ENCODE measurements at regions of chr18 and their contacts with region 1.

Region 1: GRCh38 chr18:12038639-12039417 is 54.8 kb upstream of the ANKRD62 start:
- DNase-seq: peak; percentile 65
- ATAC-seq: peak; percentile 95
- H3K4me3 ChIP-seq: peak overlapping the region; percentile 55
- H3K27ac ChIP-seq: peak overlapping the region; percentile 28; the same call in 1 of the 2 replicates
- H3K4me1 ChIP-seq: peaks cover 8% of the 10 kb centered on the region; the same call in 1 of the 2 replicates
- H3K27me3 ChIP-seq: no peaks in the 10 kb centered on the region
- CTCF ChIP-seq: peak; percentile 96
- POLR2A ChIP-seq: 0 out of 2 replicates have a peak, but pooled peaks have one; percentile 40
- RAD21 ChIP-seq: peak; percentile 95

Region 2: GRCh38 chr18:11654736-11655605 is 383.9 kb before region 1 on chr18:
- CTCF ChIA-PET with region 1: no interaction called
- POLR2A ChIA-PET with region 1: no interaction called
- dilution Hi-C with region 1: no loop called
- in situ Hi-C with region 1: no loop called
- intact Hi-C with region 1: loop called (anchors 2 kb)
- DNase-seq: peak; percentile 4
- ATAC-seq: peak; percentile 93
- H3K4me3 ChIP-seq: no peak overlapping the region
- H3K27ac ChIP-seq: no peak overlapping the region
- H3K4me1 ChIP-seq: no peaks in the 10 kb centered on the region
- H3K27me3 ChIP-seq: peaks cover 44% of the 10 kb centered on the region
- CTCF ChIP-seq: peak; percentile 64
- POLR2A ChIP-seq: no peak
- RAD21 ChIP-seq: peak; percentile 75

Region 3: DNA sequence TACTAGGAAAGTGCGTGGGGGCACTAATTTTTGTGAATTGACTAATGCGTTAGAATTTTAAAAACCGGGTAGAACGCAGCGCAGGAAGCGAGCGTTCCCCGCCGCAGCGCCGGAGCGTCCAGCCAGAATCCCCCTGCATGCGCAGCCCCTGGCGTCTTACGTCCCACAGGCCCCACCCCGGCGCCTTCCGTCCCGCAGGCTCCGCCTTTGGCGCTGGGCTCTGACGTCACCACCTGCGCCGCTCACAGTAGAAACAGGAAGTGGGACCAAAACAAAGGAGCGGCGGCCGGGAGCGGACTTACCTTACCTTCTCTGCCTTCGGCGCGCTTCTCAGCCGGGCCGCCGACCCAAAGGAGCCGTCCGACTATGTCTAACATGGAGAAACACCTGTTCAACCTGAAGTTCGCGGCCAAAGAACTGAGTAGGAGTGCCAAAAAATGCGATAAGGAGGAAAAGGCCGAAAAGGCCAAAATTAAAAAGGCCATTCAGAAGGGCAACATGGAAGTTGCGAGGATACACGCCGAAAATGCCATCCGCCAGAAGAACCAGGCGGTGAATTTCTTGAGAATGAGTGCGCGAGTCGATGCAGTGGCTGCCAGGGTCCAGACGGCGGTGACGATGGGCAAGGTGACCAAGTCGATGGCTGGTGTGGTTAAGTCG is 187.6 kb before region 1 on chr18 and contains the start of gene CHMP1B:
- CTCF ChIA-PET with region 1: no interaction called
- POLR2A ChIA-PET with region 1: no interaction called
- dilution Hi-C with region 1: no loop called
- in situ Hi-C with region 1: no loop called
- intact Hi-C with region 1: loop called (anchors 2 kb)
- DNase-seq: peak; percentile 98
- ATAC-seq: peak; percentile 96
- H3K4me3 ChIP-seq: peak within 1 kb of the TSS; percentile 83
- H3K27ac ChIP-seq: peak within 1 kb of the TSS; percentile 84
- H3K4me1 ChIP-seq: peaks cover 10% of the 10 kb centered on the region
- H3K27me3 ChIP-seq: no peaks in the 10 kb centered on the region
- CTCF ChIP-seq: no peak
- POLR2A ChIP-seq: peak; percentile 95
- RAD21 ChIP-seq: peak; percentile 6; the same call in 1 of the 2 replicates
- total RNA-seq, gene CHMP1B: 39.4 and 69.7 TPM in 2 replicates

Region 4: GRCh38 chr18:11937874-11938478 is 100.9 kb before region 1 on chr18:
- CTCF ChIA-PET with region 1: interaction called, 15 read pairs
- POLR2A ChIA-PET with region 1: no interaction called
- dilution Hi-C with region 1: no loop called
- in situ Hi-C with region 1: loop called (anchors 5 kb)
- intact Hi-C with region 1: loop called (anchors 1 kb)
- DNase-seq: peak; percentile 61
- ATAC-seq: peak; percentile 86
- H3K4me3 ChIP-seq: no peak overlapping the region
- H3K27ac ChIP-seq: no peak overlapping the region
- H3K4me1 ChIP-seq: peaks cover 2% of the 10 kb centered on the region; the same call in 1 of the 2 replicates
- H3K27me3 ChIP-seq: no peaks in the 10 kb centered on the region
- CTCF ChIP-seq: peak; percentile 84
- POLR2A ChIP-seq: no peak
- RAD21 ChIP-seq: peak; percentile 89

Region 5: DNA sequence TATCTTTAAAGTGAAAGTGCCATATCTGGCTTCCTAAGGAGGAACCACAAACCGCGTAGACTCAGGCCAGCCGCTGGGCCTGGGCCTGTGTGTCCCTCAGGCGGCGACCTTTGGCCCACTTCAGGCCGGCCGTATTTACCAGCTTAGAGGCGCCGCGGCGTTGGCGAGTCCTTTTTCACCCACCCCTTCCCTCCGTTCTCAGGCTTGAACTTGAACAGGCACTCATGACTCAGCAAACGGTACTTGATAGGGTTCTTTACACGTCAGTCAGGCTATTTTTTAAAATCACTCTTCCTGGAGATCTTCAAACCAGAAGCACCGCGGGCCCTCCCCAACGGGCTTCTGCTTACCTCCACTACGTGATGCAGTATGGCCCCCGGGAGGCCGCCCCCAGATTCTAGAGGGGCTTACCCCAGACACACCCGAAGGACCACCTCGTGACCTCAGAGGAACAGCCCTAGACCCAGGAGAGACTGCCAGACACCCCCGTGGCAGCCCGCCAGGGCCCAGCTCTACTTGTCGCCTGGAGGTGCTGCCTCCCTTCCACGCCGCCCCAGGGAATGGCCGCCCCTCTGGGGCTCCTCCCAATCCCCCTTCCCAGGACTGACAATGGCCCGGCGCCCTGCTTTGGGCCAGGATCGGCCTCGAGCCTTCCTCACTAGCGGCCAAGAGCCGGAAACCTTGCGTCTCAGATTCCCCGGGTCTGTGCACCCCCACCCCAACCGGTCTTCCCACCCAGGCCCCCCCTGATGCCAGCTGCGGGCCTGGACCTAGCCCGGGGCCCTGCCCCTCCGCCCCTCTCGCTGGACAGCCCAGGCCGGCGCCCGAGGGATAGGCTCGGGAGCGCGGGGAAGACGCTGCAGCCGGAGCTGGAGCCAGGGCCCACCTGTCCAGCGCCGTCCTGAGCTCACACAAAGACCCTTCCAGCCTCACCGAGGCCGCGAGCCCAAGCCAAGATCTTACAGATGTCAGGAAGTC is 91.3 kb before region 1 on chr18:
- CTCF ChIA-PET with region 1: no interaction called
- POLR2A ChIA-PET with region 1: no interaction called
- dilution Hi-C with region 1: no loop called
- in situ Hi-C with region 1: loop called (anchors 5 kb)
- intact Hi-C with region 1: no loop called
- DNase-seq: peak; percentile 97
- ATAC-seq: peak; percentile 88
- H3K4me3 ChIP-seq: no peak overlapping the region
- H3K27ac ChIP-seq: peak overlapping the region; percentile 88
- H3K4me1 ChIP-seq: peaks cover 24% of the 10 kb centered on the region
- H3K27me3 ChIP-seq: no peaks in the 10 kb centered on the region
- CTCF ChIP-seq: no peak
- POLR2A ChIP-seq: no peak
- RAD21 ChIP-seq: no peak

Region 6: DNA sequence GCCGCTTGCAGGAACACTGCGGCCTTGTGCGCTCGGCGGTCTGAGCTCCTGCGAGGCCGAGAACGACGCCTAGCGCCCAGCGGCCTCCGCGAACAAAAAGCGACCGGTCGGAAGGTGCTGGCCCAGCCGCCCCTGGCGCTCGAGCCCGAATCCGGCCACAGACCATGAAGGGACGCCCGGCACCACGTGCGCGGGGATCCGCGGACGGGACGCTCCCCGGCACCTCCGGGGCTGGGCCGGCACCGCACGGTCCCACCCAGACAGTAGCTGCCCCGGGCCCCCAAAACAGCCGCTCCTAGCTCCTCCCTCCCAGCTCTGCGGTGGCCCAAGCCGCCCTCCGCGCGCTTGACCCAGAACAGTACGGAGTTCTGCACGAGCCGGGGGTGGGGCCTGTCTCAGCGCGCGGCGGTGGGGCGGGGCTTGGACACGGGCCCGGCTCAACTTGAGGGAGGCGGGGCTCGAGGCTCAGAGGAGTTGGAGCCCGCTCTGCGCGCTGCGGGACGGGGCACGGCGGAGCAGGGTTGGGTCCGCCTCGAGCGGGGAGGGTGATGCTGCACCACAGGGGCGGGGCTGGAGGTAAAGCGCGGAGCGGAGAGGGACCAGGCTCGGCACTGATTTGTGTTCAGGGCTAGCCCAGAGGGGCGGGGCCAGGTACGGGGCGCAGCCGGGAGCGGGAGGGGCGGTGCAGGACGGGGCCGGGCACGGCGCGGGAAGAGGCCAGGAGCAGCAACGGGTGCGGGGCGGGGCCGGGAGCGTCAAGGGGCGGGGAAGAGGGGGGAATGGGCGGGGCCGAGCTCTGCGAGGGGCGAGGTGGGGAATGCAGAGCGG is 58.1 kb before region 1 on chr18:
- CTCF ChIA-PET with region 1: no interaction called
- POLR2A ChIA-PET with region 1: no interaction called
- dilution Hi-C with region 1: no loop called
- in situ Hi-C with region 1: no loop called
- intact Hi-C with region 1: loop called (anchors 5 kb)
- DNase-seq: peak; percentile 96
- ATAC-seq: peak; percentile 92
- H3K4me3 ChIP-seq: peak overlapping the region; percentile 46
- H3K27ac ChIP-seq: peak overlapping the region; percentile 76
- H3K4me1 ChIP-seq: peaks cover 7% of the 10 kb centered on the region
- H3K27me3 ChIP-seq: no peaks in the 10 kb centered on the region
- CTCF ChIP-seq: 0 out of 2 replicates have a peak, but pooled peaks have one; percentile 15
- POLR2A ChIP-seq: peak; percentile 69
- RAD21 ChIP-seq: no peak

Region 7: DNA sequence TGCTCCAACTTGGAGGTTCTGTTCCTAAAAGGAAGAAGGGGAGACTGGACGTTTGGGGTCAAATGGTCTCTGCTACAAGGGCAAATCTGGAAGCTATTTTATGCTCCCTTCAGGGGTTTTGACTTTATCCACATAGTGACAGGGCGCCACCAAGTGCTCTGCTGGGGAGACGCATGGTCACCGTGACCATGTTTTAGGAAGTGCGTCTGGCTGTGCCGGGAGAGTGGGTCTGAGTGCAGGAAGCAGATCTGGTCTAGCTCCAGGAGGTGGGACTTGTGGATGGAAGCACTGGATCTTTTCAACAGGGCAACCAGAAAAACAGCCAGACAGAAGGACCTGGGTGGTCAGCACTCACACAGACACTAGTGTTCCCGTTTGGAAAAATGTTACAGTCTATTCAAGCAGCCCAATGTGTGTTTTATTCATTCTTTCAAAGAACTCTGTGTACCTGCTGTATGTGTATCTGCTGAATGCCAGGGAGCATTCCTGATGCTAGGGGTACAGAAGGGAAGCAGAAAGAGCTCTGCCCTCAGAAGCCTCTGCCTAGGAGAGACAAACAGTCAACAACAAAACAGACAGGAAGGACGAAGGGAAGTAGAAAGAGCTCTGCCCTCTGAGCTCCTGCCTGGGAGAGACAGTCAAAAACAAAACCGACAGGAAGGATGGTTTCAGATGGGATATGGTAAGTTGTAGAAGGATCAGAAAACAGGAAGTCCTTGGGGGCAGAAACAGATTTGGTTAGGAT is 43.2 kb before region 1 on chr18:
- CTCF ChIA-PET with region 1: interaction called, 7 read pairs
- POLR2A ChIA-PET with region 1: no interaction called
- dilution Hi-C with region 1: no loop called
- in situ Hi-C with region 1: no loop called
- intact Hi-C with region 1: loop called (anchors 2 kb)
- DNase-seq: peak; percentile 77
- ATAC-seq: peak; percentile 88
- H3K4me3 ChIP-seq: no peak overlapping the region
- H3K27ac ChIP-seq: no peak overlapping the region
- H3K4me1 ChIP-seq: peaks cover 11% of the 10 kb centered on the region
- H3K27me3 ChIP-seq: no peaks in the 10 kb centered on the region
- CTCF ChIP-seq: peak; percentile 90
- POLR2A ChIP-seq: 0 out of 2 replicates have a peak, but pooled peaks have one; percentile 22
- RAD21 ChIP-seq: peak; percentile 95

Measured in IMR-90 (cell line).